Activated T-helper 1 cell treated with anti-CD3 and anti-CD28 coated beads, Interleukin-12 subunit alpha, Interleukin-12 subunit beta, Interleukin-2, Interleukin-4 antibody, amounts not matched to agents 30 ng/mL and 10 ng/mL and 1 ng/mL, durations not matched to agents 14 hours and 24 hours and 36 hours (primary cell): ENCODE measurements at regions of chr15 and their contacts with region 1.

Region 1: DNA sequence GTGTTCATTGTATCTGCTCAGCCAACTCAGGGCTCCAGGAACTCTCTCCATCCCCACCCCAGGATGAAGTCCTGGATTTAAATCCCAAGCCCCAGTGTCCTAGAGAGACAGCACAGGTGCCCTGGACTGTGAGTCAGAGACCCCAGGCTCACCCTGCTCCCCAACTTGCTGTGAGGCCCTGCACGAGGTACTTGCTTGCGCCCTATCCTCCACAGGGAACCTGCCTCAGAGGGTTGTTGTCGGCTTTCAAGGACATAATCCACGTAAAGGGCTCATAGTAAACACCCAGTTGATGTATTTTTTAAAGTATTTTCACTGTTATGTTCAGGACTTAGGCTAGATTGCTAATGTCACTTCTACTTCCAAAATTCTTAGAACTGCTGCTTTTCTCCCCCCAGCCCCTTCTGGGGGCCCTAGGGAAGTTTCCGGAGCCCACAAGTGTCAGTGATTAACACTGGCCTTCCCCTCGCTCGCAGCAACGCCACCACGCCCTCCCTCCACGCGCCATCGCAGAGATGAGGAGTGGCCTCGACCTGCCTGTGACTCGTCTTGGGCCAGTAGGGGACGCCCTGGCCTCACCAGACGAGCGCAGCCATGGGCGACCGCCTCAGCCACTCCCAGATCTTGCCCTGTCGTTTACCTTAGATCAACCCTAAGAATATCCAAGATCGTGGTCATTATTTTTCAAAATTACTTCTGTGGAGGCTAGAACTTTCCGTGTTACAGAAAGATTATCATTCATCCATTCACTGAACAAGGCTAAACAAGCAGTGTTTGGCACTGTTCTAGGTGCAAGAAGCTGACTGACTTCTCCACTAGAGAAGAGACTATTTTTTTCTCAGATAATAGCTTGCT is 6.0 kb upstream of the SRP14 start:
- DNase-seq: peak; percentile 77
- H3K4me3 Mint-ChIP-seq: peak overlapping the region; percentile 21
- H3K27ac Mint-ChIP-seq: peak overlapping the region; percentile 61
- H3K4me1 Mint-ChIP-seq: peaks cover 81% of the 10 kb centered on the region
- H3K27me3 Mint-ChIP-seq: no peaks in the 10 kb centered on the region

Region 2: GRCh38 chr15:40064221-40064894 is 19.4 kb after region 1 on chr15:
- intact Hi-C with region 1: loop called (anchors 1 kb)
- DNase-seq: no peak
- H3K4me3 Mint-ChIP-seq: peak overlapping the region; percentile 68
- H3K27ac Mint-ChIP-seq: peak overlapping the region; percentile 90
- H3K4me1 Mint-ChIP-seq: peaks cover 19% of the 10 kb centered on the region
- H3K27me3 Mint-ChIP-seq: no peaks in the 10 kb centered on the region

Region 3: GRCh38 chr15:40128766-40129660 is 84.1 kb after region 1 on chr15:
- intact Hi-C with region 1: loop called (anchors 2 kb)
- DNase-seq: no peak
- H3K4me3 Mint-ChIP-seq: no peak overlapping the region
- H3K27ac Mint-ChIP-seq: no peak overlapping the region
- H3K4me1 Mint-ChIP-seq: no peaks in the 10 kb centered on the region
- H3K27me3 Mint-ChIP-seq: no peaks in the 10 kb centered on the region

Region 4: GRCh38 chr15:40182358-40183029 is 137.6 kb after region 1 on chr15:
- intact Hi-C with region 1: loop called (anchors 1 kb)
- DNase-seq: no peak
- H3K4me3 Mint-ChIP-seq: peak overlapping the region; percentile 67
- H3K27ac Mint-ChIP-seq: peak overlapping the region; percentile 83
- H3K4me1 Mint-ChIP-seq: peaks cover 51% of the 10 kb centered on the region
- H3K27me3 Mint-ChIP-seq: no peaks in the 10 kb centered on the region

Region 5: DNA sequence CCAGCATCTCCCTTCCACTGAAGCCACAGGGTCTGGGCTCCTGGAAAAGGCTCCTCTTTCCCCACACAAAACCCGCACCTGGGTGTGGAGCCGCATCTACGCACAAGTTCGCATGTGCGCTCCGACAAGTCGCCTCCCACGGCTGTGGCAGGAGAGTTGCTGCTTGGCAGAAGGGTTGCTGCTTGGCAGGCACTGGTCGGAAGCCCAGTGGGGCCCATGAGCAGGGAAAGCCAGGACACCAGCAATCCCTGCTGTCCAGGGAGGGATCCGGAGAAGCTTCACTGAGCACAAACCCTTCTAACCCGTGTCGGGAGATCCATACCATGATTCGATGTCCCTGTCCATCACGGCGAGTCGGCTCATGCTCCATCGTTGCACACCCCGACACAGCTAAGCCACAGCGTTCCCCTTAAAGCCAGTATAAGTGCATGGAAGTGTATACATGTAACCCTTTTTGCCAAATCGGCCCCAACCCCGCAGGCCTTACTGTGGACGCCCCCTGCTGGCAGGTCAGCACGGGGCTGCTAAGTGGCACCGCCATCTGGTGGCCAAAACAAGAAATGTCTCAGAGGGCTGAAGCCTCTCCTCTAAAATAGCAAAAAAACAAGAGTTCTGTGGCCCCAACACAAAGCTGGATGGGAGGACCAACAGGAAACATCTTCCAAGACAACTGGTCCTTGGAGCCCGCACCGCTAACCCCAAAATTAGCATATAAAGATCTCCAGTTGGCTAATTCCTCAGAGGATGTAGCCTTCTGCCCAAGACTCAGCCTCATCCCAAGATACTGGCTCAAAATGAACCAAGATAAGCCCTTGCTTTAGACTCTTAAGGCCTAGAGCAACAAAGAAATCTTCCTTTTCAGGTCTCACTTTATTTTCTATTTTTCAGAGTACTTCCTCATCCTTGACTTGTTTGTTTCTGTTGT is 229.7 kb after region 1 on chr15:
- intact Hi-C with region 1: loop called (anchors 1 kb)
- DNase-seq: peak; percentile 83
- H3K4me3 Mint-ChIP-seq: no peak overlapping the region
- H3K27ac Mint-ChIP-seq: no peak overlapping the region
- H3K4me1 Mint-ChIP-seq: peaks cover 5% of the 10 kb centered on the region
- H3K27me3 Mint-ChIP-seq: peaks cover 31% of the 10 kb centered on the region